AG04450 (cell line): ENCODE measurements at regions of chr6 and their contacts with region 1.

Region 1: GRCh38 chr6:102670735-102671134 is 1277.2 kb downstream of the GRIK2 start:
- DNase-seq: no peak
- H3K4me3 ChIP-seq: no peak overlapping the region
- H3K27ac ChIP-seq: no peak overlapping the region
- H3K27me3 ChIP-seq: no peaks in the 10 kb centered on the region
- CTCF ChIP-seq: no peak

Region 2: GRCh38 chr6:101015541-101015940 is 1655.2 kb before region 1 on chr6:
- CTCF ChIA-PET with region 1: interaction called, 10 read pairs
- POLR2A ChIA-PET with region 1: no interaction called
- DNase-seq: no peak
- H3K4me3 ChIP-seq: no peak overlapping the region
- H3K27ac ChIP-seq: no peak overlapping the region
- H3K27me3 ChIP-seq: no peaks in the 10 kb centered on the region
- CTCF ChIP-seq: no peak

Region 3: GRCh38 chr6:102458990-102459389 is 211.7 kb before region 1 on chr6:
- CTCF ChIA-PET with region 1: no interaction called
- POLR2A ChIA-PET with region 1: no interaction called
- DNase-seq: no peak
- H3K4me3 ChIP-seq: no peak overlapping the region
- H3K27ac ChIP-seq: no peak overlapping the region
- H3K27me3 ChIP-seq: no peaks in the 10 kb centered on the region
- CTCF ChIP-seq: no peak